ENCODE measurements at regions of chrX and their contacts with region 1.

Region 1: DNA sequence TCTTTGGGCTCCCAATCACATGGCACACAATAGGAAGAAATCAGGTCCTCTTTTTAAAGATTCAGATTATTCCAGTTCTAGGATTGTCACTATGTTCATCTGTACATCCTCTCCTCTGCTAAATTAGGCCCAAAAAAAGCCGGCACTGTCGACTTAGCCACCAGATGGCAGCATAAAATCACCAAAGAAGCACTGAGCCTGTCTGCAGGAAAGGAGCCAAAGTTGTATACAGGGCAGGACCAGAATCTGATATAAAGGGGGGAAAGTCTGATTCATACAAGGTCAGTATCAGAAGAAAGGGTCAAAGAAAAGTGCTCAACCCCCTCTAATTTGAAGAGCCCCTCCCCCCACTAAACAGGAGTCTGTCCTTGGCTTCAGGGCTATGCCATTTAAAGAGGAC is 292.5 kb downstream of the CHIC1 start:
- DNase-seq: peak; percentile 28
- ATAC-seq: peak; percentile 74
- H3K4me3 ChIP-seq: no peak overlapping the region
- H3K27ac ChIP-seq: no peak overlapping the region
- H3K4me1 ChIP-seq: no peaks in the 10 kb centered on the region
- H3K27me3 ChIP-seq: no peaks in the 10 kb centered on the region
- CTCF ChIP-seq: peak; percentile 55 to 68 (median 66); a peak in 5 of 6 replicates
- POLR2A ChIP-seq: no peak
- RAD21 ChIP-seq: peak; percentile 85

Region 2: DNA sequence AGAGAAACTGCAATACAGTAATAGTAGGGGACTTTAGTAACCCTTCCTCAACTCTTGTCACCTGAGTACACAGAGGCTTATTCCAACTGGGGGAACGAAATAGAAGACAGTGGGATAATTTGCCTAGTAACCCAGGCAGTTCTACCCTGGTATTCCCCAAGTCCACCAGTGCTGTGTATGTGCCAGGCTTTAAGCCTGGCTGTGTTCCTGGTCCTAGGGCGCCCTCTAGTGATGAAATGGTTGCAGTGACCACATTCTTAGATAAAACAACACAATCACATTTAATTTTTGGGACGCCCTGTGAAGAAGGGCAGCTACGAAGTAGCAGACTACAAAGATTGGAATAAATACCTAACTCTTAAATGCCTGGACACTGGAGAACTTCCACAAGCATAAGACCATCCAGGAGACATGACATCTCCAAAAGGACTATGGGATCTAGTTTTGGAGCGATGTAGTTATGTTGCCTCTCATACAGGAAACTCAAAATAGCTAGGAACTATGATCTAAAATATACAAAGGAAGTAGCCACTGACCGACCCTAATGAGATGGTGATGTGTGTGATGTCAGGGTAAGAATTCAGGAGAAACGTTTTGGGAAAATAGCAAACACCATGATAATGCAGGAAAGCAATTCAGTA is 160.0 kb after region 1 on chrX:
- CTCF ChIA-PET with region 1: interaction called, 5 read pairs
- POLR2A ChIA-PET with region 1: no interaction called
- RAD21 ChIA-PET with region 1: no interaction called
- intact Hi-C with region 1: loop called (anchors 1 kb)
- DNase-seq: peak; percentile 40
- ATAC-seq: peak; percentile 88
- H3K4me3 ChIP-seq: no peak overlapping the region
- H3K27ac ChIP-seq: no peak overlapping the region
- H3K4me1 ChIP-seq: no peaks in the 10 kb centered on the region
- H3K27me3 ChIP-seq: no peaks in the 10 kb centered on the region
- CTCF ChIP-seq: peak; percentile 51 to 69 (median 53); a peak in 5 of 6 replicates
- POLR2A ChIP-seq: no peak
- RAD21 ChIP-seq: peak; percentile 78

Region 3: GRCh38 chrX:74133156-74133796 is 277.7 kb after region 1 on chrX:
- CTCF ChIA-PET with region 1: interaction called, 3 read pairs
- POLR2A ChIA-PET with region 1: no interaction called
- RAD21 ChIA-PET with region 1: no interaction called
- intact Hi-C with region 1: loop called (anchors 1 kb)
- DNase-seq: peak; percentile 10
- ATAC-seq: peak; percentile 71
- H3K4me3 ChIP-seq: no peak overlapping the region
- H3K27ac ChIP-seq: no peak overlapping the region
- H3K4me1 ChIP-seq: no peaks in the 10 kb centered on the region
- H3K27me3 ChIP-seq: no peaks in the 10 kb centered on the region
- CTCF ChIP-seq: peak; percentile 35 to 63 (median 48); a peak in 5 of 6 replicates
- POLR2A ChIP-seq: no peak
- RAD21 ChIP-seq: peak; percentile 75

Region 4: DNA sequence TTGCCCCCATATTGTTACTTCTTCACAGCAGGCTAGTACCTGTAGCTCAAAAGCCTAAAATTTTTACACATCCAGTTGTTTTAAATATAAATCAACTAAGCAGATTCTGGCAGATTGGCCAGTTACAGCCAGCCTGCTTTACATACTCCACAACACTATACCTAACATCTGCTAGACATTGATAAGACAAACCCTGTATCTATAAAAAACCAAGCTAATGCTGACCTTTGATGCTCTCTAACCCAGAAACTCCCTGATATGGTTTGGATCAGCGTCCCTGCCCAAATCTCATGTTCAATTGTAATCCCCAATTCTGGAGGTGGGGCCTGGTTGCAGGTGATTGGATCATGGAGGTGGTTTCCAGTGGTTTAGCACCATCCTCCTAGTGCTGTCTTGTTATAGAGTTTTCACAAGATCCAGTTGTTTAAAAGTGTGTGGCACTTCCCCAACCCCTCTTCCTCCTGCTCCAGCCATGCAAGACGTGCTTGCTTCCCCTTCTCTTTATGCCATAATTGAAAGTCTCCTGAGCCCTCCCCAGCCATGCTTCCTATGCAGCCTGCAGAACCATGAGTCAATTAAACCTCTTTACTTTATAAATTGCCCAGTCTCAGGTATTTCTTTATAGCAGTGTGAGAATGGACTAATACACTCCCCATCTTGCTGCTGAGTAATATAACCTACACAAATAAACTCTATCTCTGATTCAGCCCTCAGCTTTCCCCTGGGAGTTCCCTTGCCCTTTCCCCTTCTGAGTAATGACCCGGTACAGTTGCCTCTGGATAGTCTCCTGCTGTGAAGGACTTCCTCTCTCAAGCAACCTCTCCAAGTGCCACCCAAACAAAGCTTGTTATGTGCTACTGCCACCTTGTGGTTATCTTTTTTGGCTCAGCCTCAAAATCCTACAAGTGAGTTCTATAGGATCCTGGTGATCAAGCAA is 488.1 kb after region 1 on chrX:
- CTCF ChIA-PET with region 1: interaction called, 8 read pairs
- POLR2A ChIA-PET with region 1: no interaction called
- RAD21 ChIA-PET with region 1: no interaction called
- intact Hi-C with region 1: loop called (anchors 1 kb)
- DNase-seq: peak; percentile 77
- ATAC-seq: peak; percentile 95
- H3K4me3 ChIP-seq: no peak overlapping the region
- H3K27ac ChIP-seq: no peak overlapping the region
- H3K4me1 ChIP-seq: peaks cover 3 to 8% of the 10 kb centered on the region in 2 experiments; a peak in 1 of 4 replicates
- H3K27me3 ChIP-seq: no peaks in the 10 kb centered on the region
- CTCF ChIP-seq: peak; percentile 46 to 60 (median 53); a peak in 5 of 6 replicates
- POLR2A ChIP-seq: no peak
- RAD21 ChIP-seq: peak; percentile 77

Region 5: DNA sequence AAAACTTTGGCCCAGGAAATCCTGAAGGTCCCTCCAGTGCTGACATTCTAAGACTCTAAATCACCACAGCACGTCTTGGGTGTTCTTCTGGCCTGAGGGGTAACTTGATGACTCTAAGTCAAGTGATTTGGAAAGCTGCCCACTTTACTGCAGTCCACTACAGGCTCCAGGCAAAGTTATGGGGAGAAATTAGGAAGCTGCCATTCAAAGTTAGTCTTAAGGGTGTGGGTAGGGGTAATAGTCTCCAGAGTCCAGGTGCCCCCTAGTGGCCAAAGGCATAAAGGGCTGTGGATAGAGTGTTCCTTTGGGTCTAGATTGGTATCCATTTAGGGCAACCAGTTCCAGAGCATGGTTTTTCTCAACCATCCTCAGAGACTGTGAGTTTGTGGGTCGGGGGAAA is 527.1 kb after region 1 on chrX:
- CTCF ChIA-PET with region 1: no interaction called
- POLR2A ChIA-PET with region 1: no interaction called
- RAD21 ChIA-PET with region 1: no interaction called
- intact Hi-C with region 1: loop called (anchors 1 kb)
- DNase-seq: peak; percentile 41
- ATAC-seq: peak; percentile 94
- H3K4me3 ChIP-seq: no peak overlapping the region
- H3K27ac ChIP-seq: no peak overlapping the region
- H3K4me1 ChIP-seq: no peaks in the 10 kb centered on the region
- H3K27me3 ChIP-seq: no peaks in the 10 kb centered on the region
- CTCF ChIP-seq: peak; percentile 41 to 77 (median 66); a peak in 5 of 6 replicates
- POLR2A ChIP-seq: no peak
- RAD21 ChIP-seq: peak; percentile 60

Region 6: GRCh38 chrX:74550295-74550802 is 694.8 kb after region 1 on chrX:
- CTCF ChIA-PET with region 1: no interaction called
- POLR2A ChIA-PET with region 1: no interaction called
- RAD21 ChIA-PET with region 1: no interaction called
- intact Hi-C with region 1: loop called (anchors 5 kb)
- DNase-seq: peak; percentile 51
- ATAC-seq: peak; percentile 93
- H3K4me3 ChIP-seq: no peak overlapping the region
- H3K27ac ChIP-seq: no peak overlapping the region
- H3K4me1 ChIP-seq: no peaks in the 10 kb centered on the region
- H3K27me3 ChIP-seq: no peaks in the 10 kb centered on the region
- CTCF ChIP-seq: peak; percentile 86 to 99 (median 91)
- POLR2A ChIP-seq: no peak
- RAD21 ChIP-seq: peak; percentile 90